ENCODE measurements at regions of chr12 and their contacts with region 1.

Region 1: GRCh38 chr12:56645717-56646446 is at the start of gene ATP5F1B:
- DNase-seq: peak; percentile 92 to 99 (median 96)
- ATAC-seq: peak; percentile 97 to 99 (median 97)
- H3K4me3 ChIP-seq: peak within 1 kb of the TSS; percentile 74 to 98 (median 78)
- H3K27ac ChIP-seq: peak within 1 kb of the TSS; percentile 70 to 94 (median 86)
- H3K4me1 ChIP-seq: peaks cover 0 to 21% (median 17%) of the 10 kb centered on the region in 3 donors
- H3K27me3 ChIP-seq: no peaks in the 10 kb centered on the region
- CTCF ChIP-seq: no peak
- total RNA-seq, gene ATP5F1B: 152 to 237 (median 211) TPM

Region 2: DNA sequence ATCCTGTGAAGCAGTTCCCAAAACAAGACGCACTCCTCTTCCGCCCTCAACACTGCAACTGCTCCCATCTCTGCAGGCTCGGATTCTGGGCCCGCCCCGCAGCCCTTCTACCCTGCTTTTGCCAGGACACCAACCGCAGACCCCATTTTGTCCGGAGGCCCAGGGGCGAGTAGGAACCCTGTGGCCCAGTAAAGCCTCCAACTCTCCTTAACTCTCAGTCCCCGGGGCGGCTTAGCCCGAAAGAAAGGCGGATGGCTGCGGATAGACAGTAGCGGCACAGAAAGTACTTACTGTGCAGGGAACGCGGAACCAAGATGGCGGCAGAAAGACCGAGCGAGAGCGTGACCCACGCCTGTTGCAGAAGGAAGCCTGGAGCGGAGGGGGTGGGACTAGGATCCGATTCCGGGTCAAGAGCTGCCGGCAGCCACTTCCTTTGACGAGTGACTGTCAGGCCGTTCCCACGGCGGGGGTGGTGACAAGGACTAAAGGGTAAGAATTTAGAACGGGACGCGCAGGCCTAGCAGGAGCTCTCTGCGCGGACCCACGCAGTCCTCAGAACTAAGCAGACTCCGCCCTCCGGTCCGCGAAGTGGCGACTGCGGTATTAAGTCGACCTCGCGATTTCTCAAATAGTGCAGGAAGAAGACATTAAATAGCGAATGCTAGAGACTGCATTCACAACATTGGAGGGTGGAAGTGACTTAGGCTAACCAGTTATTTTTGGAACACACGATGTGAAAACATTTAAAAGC is 79.3 kb after region 1 on chr12 and contains the start of gene NACA:
- intact Hi-C with region 1: loop called in 2 of 3 experiments (anchors 10 kb)
- DNase-seq: peak; percentile 95 to 99 (median 96)
- ATAC-seq: peak; percentile 95 to 97 (median 96)
- H3K4me3 ChIP-seq: peak within 1 kb of the TSS; percentile 70 to 90 (median 82)
- H3K27ac ChIP-seq: peak within 1 kb of the TSS; percentile 64 to 95 (median 89)
- H3K4me1 ChIP-seq: peaks cover 14 to 36% (median 30%) of the 10 kb centered on the region in 3 donors
- H3K27me3 ChIP-seq: no peaks in the 10 kb centered on the region
- CTCF ChIP-seq: no peak
- total RNA-seq, gene NACA: 305 to 633 (median 468) TPM

Region 3: DNA sequence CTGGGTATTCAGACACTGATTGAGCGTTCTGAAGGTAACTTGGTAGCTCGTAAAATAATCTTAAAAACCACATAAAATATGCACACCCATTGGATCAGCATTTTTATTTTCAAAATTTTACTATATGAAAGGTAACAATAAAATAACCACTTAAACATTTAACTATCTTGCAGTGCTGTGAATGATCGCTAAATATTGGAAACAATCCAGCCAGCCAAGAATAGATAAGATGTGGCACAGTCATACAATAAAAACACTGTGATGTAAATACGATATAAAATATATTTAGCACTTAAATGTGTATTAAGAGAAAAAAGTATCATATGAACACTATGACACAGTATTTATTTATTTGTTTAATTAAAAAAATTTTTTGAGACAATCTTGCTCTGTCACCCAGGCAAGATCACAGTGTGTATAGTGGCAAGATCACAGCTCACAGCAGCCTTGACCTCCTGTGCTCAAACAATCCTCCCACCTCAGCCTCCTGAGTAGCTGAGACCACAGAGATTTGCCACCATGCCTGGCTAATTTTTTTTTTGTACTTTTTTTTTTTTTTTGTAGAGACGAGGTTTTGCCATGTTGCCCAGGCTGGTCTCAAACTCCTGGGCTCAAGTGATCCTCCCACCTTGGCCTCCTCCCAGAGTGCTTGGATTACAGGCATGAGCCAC is 249.0 kb after region 1 on chr12:
- intact Hi-C with region 1: no loop called
- DNase-seq: no peak
- ATAC-seq: peak in 2 of 4 donors; percentile 50 to 58
- H3K4me3 ChIP-seq: no peak overlapping the region
- H3K27ac ChIP-seq: no peak overlapping the region
- H3K4me1 ChIP-seq: peaks cover 0 to 5% (median 0%) of the 10 kb centered on the region in 3 donors
- H3K27me3 ChIP-seq: no peaks in the 10 kb centered on the region
- CTCF ChIP-seq: no peak